Transverse colon (tissue), 4 donors: ENCODE measurements at regions of chr19 and their contacts with region 1.

Region 1: GRCh38 chr19:54851353-54851752 is 1.1 kb downstream of the KIR3DL2 start:
- DNase-seq: no peak
- H3K4me3 ChIP-seq: no peak overlapping the region
- H3K27ac ChIP-seq: no peak overlapping the region
- H3K4me1 ChIP-seq: no peaks in the 10 kb centered on the region
- H3K27me3 ChIP-seq: no peaks in the 10 kb centered on the region
- CTCF ChIP-seq: no peak
- EP300 ChIP-seq: no peak
- POLR2A ChIP-seq: no peak

Region 2: GRCh38 chr19:54817670-54818536 is 33.5 kb before region 1 on chr19:
- in situ Hi-C with region 1: loop called in 1 of 4 experiments (anchors 5 kb)
- intact Hi-C with region 1: no loop called
- DNase-seq: no peak
- H3K4me3 ChIP-seq: no peak overlapping the region
- H3K27ac ChIP-seq: no peak overlapping the region
- H3K4me1 ChIP-seq: no peaks in the 10 kb centered on the region
- H3K27me3 ChIP-seq: no peaks in the 10 kb centered on the region
- CTCF ChIP-seq: no peak
- EP300 ChIP-seq: no peak
- POLR2A ChIP-seq: no peak

Region 3: GRCh38 chr19:55080968-55081772 is 229.8 kb after region 1 on chr19:
- in situ Hi-C with region 1: no loop called
- intact Hi-C with region 1: no loop called
- DNase-seq: peak; percentile 93
- H3K4me3 ChIP-seq: peak overlapping the region; percentile 6 to 60 (median 51)
- H3K27ac ChIP-seq: peak overlapping the region; percentile 77 to 86 (median 81)
- H3K4me1 ChIP-seq: peaks cover 5 to 32% (median 23%) of the 10 kb centered on the region in 4 donors
- H3K27me3 ChIP-seq: peaks cover 70% of the 10 kb centered on the region
- CTCF ChIP-seq: no peak
- EP300 ChIP-seq: no peak
- POLR2A ChIP-seq: peak; percentile 57